Right ventricle myocardium superior (tissue), 1 donor: ENCODE measurements at regions of chr5 and their contacts with region 1.

Region 1: GRCh38 chr5:10863763-10864383 is 102.8 kb upstream of the DAP start:
- DNase-seq: peak; percentile 57
- ATAC-seq: peak; percentile 69

Region 2: GRCh38 chr5:11110128-11110527 is 246.3 kb after region 1 on chr5:
- intact Hi-C with region 1: loop called (anchors 10 kb)
- DNase-seq: no peak
- ATAC-seq: peak; percentile 38

Region 3: DNA sequence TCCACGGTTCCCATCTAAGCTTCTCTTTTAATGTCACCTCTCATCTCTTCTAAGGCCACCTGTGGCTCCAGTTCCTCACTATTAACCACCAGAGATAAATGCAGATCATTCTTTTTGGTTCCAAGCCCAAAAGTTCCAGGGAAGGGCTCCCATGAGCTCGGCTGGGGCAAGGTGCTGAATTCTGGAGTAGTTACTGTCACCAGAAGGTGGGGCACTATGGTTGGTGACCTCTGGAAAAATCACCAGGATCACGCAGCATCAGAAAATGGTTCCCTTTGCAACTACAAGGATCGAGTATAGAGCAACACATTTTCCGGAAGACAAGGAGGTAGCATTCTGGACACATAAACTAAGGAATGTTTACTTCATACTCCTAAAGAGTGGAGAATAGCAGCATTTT is 425.9 kb after region 1 on chr5:
- intact Hi-C with region 1: no loop called
- DNase-seq: no peak
- ATAC-seq: no peak